A673 (cell line): ENCODE measurements at regions of chr5 and their contacts with region 1.

Region 1: DNA sequence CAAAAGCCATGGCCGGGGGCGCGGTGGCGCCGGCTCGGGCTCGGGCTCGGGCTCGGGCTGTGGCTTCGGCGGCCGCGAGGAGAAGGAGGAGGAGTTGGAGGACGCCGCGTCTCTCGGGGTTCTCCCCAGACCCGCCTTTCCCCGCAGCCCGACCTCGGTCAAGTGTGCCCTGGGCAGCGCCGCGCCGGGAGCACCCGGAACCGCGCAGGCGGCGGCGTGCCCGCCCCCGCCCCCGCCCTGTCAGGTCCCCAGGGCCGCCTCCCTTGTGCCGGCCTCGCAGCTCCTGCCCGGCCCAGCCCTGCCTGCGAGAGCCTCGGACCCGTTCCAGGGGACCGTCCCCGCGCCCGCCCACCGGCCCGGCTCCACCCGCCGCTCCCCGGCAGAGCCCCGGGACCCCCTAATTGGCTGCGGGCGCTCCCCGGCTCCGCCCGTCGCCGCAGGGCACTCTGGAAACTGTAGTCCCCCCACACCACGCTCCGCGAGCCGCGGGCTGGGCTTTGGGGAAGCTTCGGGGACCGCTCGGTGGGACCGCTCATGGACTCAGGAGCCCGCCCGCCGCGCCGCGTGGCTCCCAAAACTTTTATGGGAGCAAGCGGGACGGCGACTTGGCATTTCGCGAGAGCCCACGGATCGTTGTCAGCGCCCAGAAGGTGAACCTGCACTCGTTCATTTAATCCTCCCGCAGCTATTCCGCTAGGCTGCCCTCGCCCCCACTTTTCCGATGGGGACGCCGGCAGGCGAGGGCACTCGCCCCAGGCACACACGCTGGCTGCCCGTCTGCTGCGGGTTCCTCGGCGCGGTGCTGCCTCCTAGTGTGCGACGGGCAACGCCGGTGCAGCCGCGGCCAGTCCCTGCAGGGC is at the start of gene STK10:
- DNase-seq: peak; percentile 90
- H3K4me3 ChIP-seq: peak within 1 kb of the TSS; percentile 79
- H3K27ac ChIP-seq: no peak within 1 kb of the TSS
- H3K4me1 ChIP-seq: no peaks in the 10 kb centered on the region
- H3K27me3 ChIP-seq: no peaks in the 10 kb centered on the region
- CTCF ChIP-seq: peak; percentile 79
- total RNA-seq, gene STK10: 3.8 and 3.9 TPM in 2 replicates

Region 2: GRCh38 chr5:172006321-172007174 is 181.7 kb before region 1 on chr5 and contains the start of gene FBXW11:
- CTCF ChIA-PET with region 1: no interaction called
- POLR2A ChIA-PET with region 1: no interaction called
- intact Hi-C with region 1: loop called (anchors 5 kb)
- DNase-seq: peak; percentile 95
- H3K4me3 ChIP-seq: peak within 1 kb of the TSS; percentile 93
- H3K27ac ChIP-seq: peak within 1 kb of the TSS; percentile 99
- H3K4me1 ChIP-seq: peaks cover 11% of the 10 kb centered on the region
- H3K27me3 ChIP-seq: no peaks in the 10 kb centered on the region
- CTCF ChIP-seq: no peak
- total RNA-seq, gene FBXW11: 34.9 and 40.2 TPM in 2 replicates

Region 3: GRCh38 chr5:172106511-172107356 is 81.5 kb before region 1 on chr5:
- CTCF ChIA-PET with region 1: no interaction called
- POLR2A ChIA-PET with region 1: no interaction called
- intact Hi-C with region 1: loop called (anchors 1 kb)
- DNase-seq: peak; percentile 62
- H3K4me3 ChIP-seq: peak overlapping the region; percentile 39
- H3K27ac ChIP-seq: no peak overlapping the region
- H3K4me1 ChIP-seq: peaks cover 3% of the 10 kb centered on the region
- H3K27me3 ChIP-seq: no peaks in the 10 kb centered on the region
- CTCF ChIP-seq: peak; percentile 94

Region 4: DNA sequence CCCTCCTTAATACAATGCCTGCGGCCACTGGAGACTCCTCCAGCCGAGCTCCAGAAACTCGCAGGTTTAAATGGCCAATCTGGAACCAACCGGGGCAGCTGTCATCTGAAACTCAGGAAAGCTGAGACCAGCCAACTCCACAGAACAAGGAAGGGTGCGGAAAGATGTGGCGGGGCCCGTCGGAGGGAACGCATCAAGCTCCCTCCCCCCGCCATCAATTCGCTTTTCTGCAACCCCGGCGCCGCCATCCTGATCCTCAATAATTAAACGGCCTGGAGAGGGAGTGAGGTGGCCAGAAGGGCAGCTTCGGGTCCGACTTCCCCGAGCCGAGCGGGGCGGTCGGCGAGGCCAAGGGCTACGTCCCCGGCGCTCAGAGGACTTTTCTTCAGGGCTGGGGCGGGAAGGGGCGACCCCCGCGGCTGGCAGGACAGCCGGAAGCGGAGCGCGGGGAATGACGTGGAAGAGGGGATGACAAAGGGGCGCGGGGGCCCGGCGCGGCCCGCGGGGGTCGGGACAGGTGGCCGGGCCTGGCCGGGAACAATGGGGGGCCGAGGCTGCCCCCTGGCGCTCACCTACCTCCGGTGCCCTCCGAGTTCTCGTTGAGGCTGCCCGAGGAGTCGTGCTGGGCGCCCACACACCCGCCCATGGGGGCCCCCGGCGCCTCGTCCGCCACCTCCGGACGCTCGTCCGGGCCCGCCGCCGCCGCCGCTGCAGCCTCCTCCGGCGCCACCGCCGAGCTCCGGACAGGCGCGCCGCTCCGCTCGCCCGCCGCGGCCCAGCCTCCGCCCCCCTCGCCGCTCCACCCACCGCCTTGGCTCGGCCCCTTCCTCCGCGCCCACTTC is 95.0 kb after region 1 on chr5 and contains the start of gene UBTD2:
- CTCF ChIA-PET with region 1: interaction called, 3 read pairs
- POLR2A ChIA-PET with region 1: no interaction called
- intact Hi-C with region 1: loop called (anchors 5 kb)
- DNase-seq: peak; percentile 82
- H3K4me3 ChIP-seq: peak within 1 kb of the TSS; percentile 94
- H3K27ac ChIP-seq: peak within 1 kb of the TSS; percentile 77
- H3K4me1 ChIP-seq: peaks cover 22% of the 10 kb centered on the region
- H3K27me3 ChIP-seq: no peaks in the 10 kb centered on the region
- CTCF ChIP-seq: peak; percentile 37; the same call in 1 of the 2 replicates
- total RNA-seq, gene UBTD2: 18.3 and 20.0 TPM in 2 replicates